ENCODE measurements at regions of chr6 and their contacts with region 1.

Region 1: DNA sequence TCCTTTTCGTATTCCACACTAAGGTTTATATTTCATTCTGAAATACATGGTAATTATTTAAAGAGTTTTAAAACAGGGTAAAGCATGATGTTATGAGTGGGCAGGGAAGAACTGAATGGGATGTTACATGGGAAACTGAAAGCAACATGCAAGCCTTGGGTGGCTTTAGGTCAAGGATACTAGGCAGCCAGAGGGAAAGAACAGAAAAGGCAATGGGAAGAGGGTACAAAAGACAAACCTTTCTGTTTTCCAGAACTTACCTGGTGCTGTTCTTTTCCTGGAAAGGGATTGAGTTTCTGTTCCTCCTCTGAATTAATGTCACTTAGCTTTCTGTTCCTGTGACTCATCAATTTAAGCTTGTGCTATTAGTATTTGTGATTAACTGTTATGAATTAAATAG is 71.2 kb upstream of the SMIM8 start:
- DNase-seq: no peak

Region 2: DNA sequence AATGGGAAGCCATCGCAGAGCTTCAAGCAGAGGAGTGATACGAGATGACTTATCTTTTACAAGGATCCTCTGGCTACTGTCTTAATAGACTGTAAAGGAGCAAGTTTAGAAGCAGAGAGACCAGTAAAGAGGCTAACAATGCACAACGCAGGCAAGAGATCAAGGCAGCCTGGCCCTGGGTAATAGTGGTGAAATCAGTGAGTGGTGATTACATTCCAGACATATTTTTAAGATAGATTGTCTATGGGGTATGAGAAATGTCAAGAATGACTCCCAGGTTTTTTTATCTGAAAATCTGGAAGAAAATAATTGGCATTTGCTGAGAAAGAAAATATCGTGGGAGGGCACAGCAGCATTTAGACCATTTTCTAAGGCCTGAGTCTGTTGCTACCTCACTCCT is 527.5 kb before region 1 on chr6:
- intact Hi-C with region 1: no loop called
- DNase-seq: no peak

Region 3: GRCh38 chr6:87099472-87099871 is 151.8 kb before region 1 on chr6:
- intact Hi-C with region 1: no loop called
- DNase-seq: no peak

Region 4: DNA sequence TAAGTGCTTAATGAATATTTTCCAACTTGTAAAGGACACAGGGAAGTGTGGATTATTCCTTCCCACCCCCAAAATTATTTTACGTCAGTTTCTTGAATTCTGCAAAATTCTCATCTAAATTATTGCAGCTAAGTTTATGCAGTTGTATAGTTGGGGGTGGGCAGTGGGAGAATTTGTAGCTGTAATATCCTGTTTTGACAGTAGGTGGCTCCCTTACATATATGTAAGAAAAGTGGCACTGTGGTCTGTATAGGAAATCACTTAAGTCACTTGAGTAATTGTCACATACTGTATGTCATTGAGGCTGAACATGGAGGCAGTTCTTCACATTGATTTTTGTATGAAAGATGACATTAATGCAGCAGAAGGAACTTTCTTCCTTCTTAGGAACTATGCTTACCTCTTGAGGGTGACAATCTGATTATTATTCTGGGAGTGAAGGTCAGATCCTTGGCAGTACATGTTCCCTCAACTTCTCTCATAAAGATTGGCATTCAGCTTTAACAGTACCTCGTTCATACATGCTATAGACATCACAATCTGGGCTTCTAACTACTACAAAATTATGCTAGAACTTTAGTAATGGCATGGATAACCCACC is 141.9 kb after region 1 on chr6:
- intact Hi-C with region 1: no loop called
- DNase-seq: peak in 18 of 42 donors; percentile 14 to 78 (median 36)

Region 5: GRCh38 chr6:89161326-89162046 is 1910.3 kb after region 1 on chr6:
- intact Hi-C with region 1: loop called (anchors 10 kb)
- DNase-seq: no peak